ENCODE measurements at regions of chr3 and their contacts with region 1.

Region 1: GRCh38 chr3:141796081-141796888 is 33.1 kb downstream of the GRK7 start:
- DNase-seq: no peak
- ATAC-seq: no peak
- H3K4me3 Mint-ChIP-seq: no peak overlapping the region; the same call in 1 of the 2 replicates
- H3K27ac Mint-ChIP-seq: peak overlapping the region; percentile 14; the same call in 1 of the 2 replicates
- H3K4me1 Mint-ChIP-seq: peaks cover 29% of the 10 kb centered on the region
- H3K27me3 Mint-ChIP-seq: peaks cover 33% of the 10 kb centered on the region
- CTCF ChIP-seq: no peak

Region 2: DNA sequence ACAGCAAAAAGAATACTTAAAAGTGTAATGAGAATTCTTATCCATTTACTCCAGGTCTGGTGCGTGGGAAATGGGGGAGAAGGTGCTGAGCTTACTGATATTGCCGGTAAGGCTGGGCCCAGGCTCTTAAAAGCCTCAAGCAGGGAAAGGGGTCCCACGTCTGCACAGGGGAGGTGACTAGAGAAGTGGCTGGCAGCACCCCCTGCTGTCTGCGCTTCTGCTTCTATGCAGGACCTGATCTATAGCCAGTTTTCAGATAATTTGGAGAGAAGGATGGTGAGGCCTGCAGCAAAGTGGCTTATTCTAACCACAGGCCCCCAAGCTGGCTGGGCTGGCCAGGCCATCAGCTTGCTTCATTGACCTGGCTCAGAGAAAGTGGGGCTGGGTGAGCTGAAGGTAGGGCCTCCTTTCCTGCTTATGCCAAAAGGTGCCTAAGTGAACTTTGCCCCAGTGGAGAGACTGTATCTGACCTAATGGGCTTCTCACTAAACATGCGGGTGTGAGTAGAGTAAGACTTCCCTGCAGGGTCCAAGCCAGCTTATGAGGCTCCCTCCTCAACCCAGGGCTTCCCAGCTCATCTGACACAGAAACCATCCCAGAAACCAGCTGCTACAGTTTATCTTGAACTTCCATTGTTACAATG is 49.2 kb after region 1 on chr3:
- CTCF ChIA-PET with region 1: interaction called, 10 read pairs
- POLR2A ChIA-PET with region 1: no interaction called
- DNase-seq: peak; percentile 53
- ATAC-seq: peak; percentile 80
- H3K4me3 Mint-ChIP-seq: no peak overlapping the region
- H3K27ac Mint-ChIP-seq: no peak overlapping the region
- H3K4me1 Mint-ChIP-seq: peaks cover 10% of the 10 kb centered on the region
- H3K27me3 Mint-ChIP-seq: no peaks in the 10 kb centered on the region; the same call in 1 of the 2 replicates
- CTCF ChIP-seq: no peak

Region 3: DNA sequence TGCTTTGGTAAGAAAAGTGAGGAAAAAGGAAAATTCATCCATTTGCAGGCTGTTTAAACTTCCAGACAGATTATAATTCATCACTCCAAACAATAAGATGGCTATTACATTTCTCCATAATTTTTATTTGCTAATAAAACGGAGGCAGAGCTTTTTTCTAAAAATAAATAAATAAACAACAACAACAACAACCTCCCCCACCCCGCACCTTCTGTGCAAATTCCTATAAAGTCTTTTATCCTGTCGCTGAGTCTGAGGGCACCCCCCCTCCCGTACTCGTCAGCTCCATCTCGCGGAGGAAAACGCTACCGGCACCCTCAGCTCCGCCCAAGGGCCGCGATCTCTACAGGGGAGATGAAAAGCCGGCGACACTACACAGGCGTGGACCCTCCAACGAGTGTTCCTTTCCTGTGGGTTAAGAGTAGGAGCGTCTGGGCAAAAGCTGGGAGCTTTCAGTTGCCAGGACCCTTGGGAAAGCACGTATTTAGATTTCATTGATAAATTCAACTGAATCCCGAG is 79.1 kb after region 1 on chr3:
- CTCF ChIA-PET with region 1: interaction called, 19 read pairs
- POLR2A ChIA-PET with region 1: interaction called, 4 read pairs
- DNase-seq: peak; percentile 87
- ATAC-seq: peak; percentile 79
- H3K4me3 Mint-ChIP-seq: peak overlapping the region; percentile 91
- H3K27ac Mint-ChIP-seq: peak overlapping the region; percentile 94
- H3K4me1 Mint-ChIP-seq: peaks cover 28% of the 10 kb centered on the region
- H3K27me3 Mint-ChIP-seq: no peaks in the 10 kb centered on the region
- CTCF ChIP-seq: peak; percentile 54

Region 4: GRCh38 chr3:141913150-141913811 is 117.0 kb after region 1 on chr3:
- CTCF ChIA-PET with region 1: interaction called, 13 read pairs
- POLR2A ChIA-PET with region 1: interaction called, 7 read pairs
- DNase-seq: no peak
- ATAC-seq: peak; percentile 59
- H3K4me3 Mint-ChIP-seq: no peak overlapping the region
- H3K27ac Mint-ChIP-seq: no peak overlapping the region
- H3K4me1 Mint-ChIP-seq: 0 out of 2 replicates have a peak, but pooled peaks cover 4% of the 10 kb centered on the region
- H3K27me3 Mint-ChIP-seq: no peaks in the 10 kb centered on the region
- CTCF ChIP-seq: peak; percentile 44

Measured in WTC11 (cell line).